GM10248 (cell line): ENCODE measurements at regions of chr1 and their contacts with region 1.

Region 1: DNA sequence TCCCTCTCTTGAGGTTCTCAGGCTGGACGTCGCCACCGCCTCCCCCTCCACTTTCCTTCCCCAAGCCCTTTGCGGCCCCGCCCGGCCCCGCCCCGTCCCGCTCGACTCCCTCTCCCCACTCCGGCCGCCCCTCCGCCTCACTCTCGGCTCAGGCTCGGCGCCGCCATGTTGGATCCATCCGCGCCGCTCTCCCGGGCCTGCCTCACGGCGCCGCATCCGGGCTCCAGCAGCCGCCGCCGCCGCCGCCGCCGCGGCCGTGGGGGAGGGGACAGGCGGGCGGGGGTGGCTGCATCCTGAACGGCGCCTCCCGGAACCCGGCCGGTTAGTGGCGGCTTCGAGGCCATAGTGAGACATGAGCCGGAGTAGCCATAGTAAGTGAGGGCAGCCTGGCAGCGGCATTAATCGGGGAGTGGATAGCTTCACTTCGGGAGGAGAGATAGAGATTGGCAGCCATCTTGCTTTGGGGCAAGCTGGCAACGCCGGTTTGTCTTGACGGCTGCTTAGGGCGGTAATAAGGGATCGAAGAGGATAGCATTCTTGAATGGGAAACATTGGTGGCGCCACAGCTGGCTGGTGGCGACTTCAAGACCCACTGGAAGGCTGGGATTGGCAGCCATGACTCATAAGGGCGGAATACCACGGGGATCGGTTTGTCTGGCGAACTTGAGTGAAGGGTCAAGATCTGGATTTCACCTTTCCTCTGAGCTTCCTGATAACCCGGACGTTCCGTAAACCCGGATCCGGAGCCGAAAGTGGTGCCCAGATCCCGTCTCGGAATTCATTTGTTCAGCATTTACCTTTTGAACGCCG is at the start of gene DEDD:
- DNase-seq: peak; percentile 93
- CTCF ChIP-seq: no peak

Region 2: DNA sequence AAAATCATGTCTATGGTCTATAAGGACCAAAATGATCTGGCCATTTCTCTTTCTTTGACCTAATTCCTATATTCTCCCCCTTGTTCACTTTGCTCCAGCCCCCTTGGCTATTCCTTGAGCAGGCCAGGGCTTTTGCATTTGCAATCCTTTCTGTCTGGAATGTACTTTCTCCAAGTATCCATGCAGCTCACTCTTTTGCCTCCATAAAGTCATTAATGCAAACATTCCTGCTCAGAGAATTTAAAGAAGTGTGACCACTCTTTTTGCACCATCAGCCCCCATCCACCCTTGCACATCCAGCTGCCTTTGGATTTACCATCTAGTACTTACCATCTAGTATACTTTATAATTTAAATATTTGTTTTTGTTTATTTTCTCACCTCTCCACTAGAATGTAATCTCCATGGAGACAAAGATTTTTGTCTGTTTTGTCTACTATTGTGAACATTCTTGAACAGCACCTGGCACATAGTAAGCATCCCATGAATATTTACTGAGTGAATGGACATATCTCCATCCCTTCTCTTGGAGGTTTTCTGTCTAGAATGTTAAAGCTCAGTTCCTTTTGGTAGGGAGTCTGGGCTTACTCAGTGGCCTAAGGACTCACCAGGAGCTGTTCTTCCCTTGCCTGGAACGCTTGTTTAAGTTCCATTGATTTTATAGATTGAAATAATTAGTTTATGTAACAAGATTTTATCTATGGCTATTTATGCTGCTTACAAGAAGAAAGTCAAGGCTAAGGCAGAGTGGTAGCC is 632.2 kb before region 1 on chr1:
- CTCF ChIA-PET with region 1: no interaction called
- POLR2A ChIA-PET with region 1: no interaction called
- DNase-seq: no peak
- CTCF ChIP-seq: no peak

Region 3: GRCh38 chr1:161106431-161106830 is 26.2 kb before region 1 on chr1:
- CTCF ChIA-PET with region 1: no interaction called
- POLR2A ChIA-PET with region 1: no interaction called
- DNase-seq: no peak
- CTCF ChIP-seq: no peak

Region 4: GRCh38 chr1:161117759-161118581 is 14.6 kb before region 1 on chr1 and contains the starts of genes NIT1 and PFDN2:
- CTCF ChIA-PET with region 1: interaction called, 9 read pairs
- POLR2A ChIA-PET with region 1: interaction called, 14 read pairs
- DNase-seq: peak; percentile 93
- CTCF ChIP-seq: peak; percentile 0

Region 5: DNA sequence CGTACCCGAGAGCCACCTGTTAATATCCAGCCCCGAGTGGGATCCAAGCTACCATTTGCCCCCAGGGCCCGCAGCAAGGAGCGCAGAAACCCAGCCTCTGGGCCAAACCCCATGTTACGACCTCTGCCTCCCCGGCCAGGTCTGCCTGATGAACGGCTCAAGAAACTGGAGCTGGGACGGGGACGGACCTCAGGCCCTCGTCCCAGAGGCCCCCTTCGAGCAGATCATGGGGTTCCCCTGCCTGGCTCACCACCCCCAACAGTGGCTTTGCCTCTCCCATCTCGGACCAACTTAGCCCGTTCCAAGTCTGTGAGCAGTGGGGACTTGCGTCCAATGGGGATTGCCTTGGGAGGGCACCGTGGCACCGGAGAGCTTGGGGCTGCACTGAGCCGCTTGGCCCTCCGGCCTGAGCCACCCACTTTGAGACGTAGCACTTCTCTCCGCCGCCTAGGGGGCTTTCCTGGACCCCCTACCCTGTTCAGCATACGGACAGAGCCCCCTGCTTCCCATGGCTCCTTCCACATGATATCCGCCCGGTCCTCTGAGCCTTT is 28.1 kb after region 1 on chr1:
- CTCF ChIA-PET with region 1: interaction called, 25 read pairs
- POLR2A ChIA-PET with region 1: interaction called, 12 read pairs
- DNase-seq: no peak
- CTCF ChIP-seq: no peak